IMR-90 (cell line): ENCODE measurements at regions of chr1 and their contacts with region 1.

Region 1: GRCh38 chr1:12549460-12550349 is 68.3 kb downstream of the DHRS3 start:
- DNase-seq: peak; percentile 98
- ATAC-seq: peak; percentile 90
- H3K4me3 ChIP-seq: no peak overlapping the region
- H3K27ac ChIP-seq: peak overlapping the region; percentile 60
- H3K4me1 ChIP-seq: peaks cover 17% of the 10 kb centered on the region
- H3K27me3 ChIP-seq: peaks cover 7% of the 10 kb centered on the region; the same call in 1 of the 2 replicates
- CTCF ChIP-seq: no peak
- POLR2A ChIP-seq: no peak
- RAD21 ChIP-seq: peak; percentile 25

Region 2: DNA sequence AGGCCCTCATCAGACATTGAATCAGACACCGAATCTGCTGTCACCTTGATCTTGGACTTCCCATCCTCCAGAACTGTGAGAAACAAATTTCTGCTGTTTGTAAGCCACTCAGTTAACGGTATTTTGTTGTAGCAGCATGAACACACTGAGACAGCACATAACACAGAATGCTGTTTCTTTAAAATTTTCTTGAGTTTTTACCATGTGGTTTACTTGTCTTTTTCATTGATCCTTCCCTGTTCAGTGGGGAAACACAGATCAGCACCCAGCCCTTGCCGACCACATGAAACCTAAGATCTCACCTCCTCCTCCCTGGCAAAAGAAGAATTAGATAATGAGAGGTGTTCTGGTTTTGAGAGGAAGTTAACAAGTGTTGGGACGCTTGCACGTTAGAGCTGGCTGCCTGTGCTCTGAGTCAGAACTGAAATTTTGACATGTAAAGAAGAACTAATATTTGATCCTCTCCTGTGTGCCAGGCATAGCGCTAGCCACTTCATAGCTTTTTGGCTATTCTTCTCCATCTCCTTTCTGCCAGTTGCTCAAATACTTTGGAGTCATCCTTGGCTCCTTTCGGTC is 111.3 kb before region 1 on chr1:
- CTCF ChIA-PET with region 1: no interaction called
- POLR2A ChIA-PET with region 1: no interaction called
- dilution Hi-C with region 1: no loop called
- in situ Hi-C with region 1: no loop called
- intact Hi-C with region 1: no loop called
- DNase-seq: no peak
- ATAC-seq: no peak
- H3K4me3 ChIP-seq: no peak overlapping the region
- H3K27ac ChIP-seq: no peak overlapping the region
- H3K4me1 ChIP-seq: peaks cover 22% of the 10 kb centered on the region
- H3K27me3 ChIP-seq: no peaks in the 10 kb centered on the region
- CTCF ChIP-seq: no peak
- POLR2A ChIP-seq: no peak
- RAD21 ChIP-seq: no peak

Region 3: DNA sequence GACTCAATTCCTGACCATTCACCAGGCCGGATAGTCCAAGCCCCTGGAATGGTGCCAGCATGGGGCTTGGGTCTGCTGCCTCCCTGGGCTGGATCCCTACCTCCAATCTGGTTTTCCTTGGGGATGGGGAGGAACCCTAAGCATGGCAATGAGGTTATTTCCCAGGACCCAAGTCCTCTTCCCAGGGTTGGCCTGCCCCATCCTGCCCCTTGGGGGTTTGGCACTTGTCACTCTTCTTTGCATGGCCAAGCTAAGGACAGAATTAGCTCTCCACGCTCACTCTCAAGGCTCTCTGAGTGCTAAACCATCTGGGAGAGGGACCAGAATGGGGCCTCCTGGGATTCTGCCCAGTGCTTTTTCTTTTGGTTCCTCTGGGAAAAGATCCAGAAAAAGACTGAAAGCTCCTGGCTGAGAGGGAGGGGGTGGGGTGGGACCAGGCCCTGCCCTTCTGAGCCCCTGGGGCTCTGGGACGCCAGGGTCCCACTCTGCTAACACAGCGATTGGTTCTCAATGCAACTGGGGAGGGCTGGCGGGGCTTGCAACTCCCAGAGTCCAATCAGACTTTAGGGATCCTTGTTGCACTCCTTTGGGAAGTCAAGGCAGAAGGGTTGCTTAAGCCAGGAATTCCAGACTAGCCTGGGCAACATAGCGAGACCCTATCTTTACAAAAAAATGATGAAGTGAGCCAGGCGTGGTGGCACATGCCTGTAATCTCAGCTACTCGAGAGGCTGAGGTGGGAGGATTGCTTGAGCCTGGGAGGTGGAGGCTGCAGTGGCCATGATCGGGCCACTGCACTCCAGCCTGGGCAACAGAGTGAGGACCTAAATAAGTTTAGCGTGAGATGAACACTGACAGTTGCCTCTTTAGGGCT is 15.6 kb after region 1 on chr1:
- CTCF ChIA-PET with region 1: no interaction called
- POLR2A ChIA-PET with region 1: interaction called, 14 read pairs
- dilution Hi-C with region 1: no loop called
- in situ Hi-C with region 1: no loop called
- intact Hi-C with region 1: no loop called
- DNase-seq: no peak
- ATAC-seq: peak; percentile 53
- H3K4me3 ChIP-seq: no peak overlapping the region
- H3K27ac ChIP-seq: no peak overlapping the region
- H3K4me1 ChIP-seq: peaks cover 3% of the 10 kb centered on the region; the same call in 1 of the 2 replicates
- H3K27me3 ChIP-seq: no peaks in the 10 kb centered on the region
- CTCF ChIP-seq: no peak
- POLR2A ChIP-seq: no peak
- RAD21 ChIP-seq: no peak

Region 4: GRCh38 chr1:12596007-12596821 is 46.5 kb after region 1 on chr1:
- CTCF ChIA-PET with region 1: no interaction called
- POLR2A ChIA-PET with region 1: no interaction called
- dilution Hi-C with region 1: no loop called
- in situ Hi-C with region 1: no loop called
- intact Hi-C with region 1: loop called (anchors 2 kb)
- DNase-seq: peak; percentile 98
- ATAC-seq: peak; percentile 86
- H3K4me3 ChIP-seq: no peak overlapping the region; the same call in 1 of the 2 replicates
- H3K27ac ChIP-seq: peak overlapping the region; percentile 83
- H3K4me1 ChIP-seq: peaks cover 27% of the 10 kb centered on the region
- H3K27me3 ChIP-seq: no peaks in the 10 kb centered on the region
- CTCF ChIP-seq: no peak
- POLR2A ChIP-seq: peak; percentile 73
- RAD21 ChIP-seq: peak; percentile 17; the same call in 1 of the 2 replicates

Region 5: DNA sequence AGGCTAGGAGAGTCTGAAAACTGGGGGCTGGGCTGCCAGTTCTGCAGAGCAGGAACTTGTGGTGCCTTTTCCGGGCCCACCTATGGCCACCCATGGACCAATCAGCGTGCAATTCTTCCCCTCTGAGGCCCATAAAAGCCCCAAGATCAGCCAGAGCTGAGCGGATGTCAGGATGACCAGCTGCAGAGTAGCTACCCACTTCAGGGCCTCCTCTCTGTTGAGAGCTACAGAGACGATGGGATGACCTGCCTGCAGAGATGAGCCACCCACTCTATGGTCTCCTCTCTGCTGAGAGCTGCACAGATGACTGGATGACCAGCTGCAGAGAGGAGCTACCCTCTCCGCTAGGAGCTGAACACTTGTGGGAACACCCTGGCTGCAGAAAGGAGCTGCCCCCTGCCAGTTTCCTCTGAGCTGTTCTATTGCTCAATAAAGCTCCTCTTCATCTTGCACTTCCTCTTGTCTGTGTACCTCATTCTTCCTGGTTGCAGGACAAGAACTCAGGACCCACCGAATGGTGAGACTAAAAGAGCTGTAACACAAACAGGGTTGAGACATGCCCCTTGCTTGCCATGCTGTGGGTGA is 81.3 kb after region 1 on chr1:
- CTCF ChIA-PET with region 1: no interaction called
- POLR2A ChIA-PET with region 1: no interaction called
- dilution Hi-C with region 1: no loop called
- in situ Hi-C with region 1: no loop called
- intact Hi-C with region 1: no loop called
- DNase-seq: no peak
- ATAC-seq: no peak
- H3K4me3 ChIP-seq: no peak overlapping the region
- H3K27ac ChIP-seq: no peak overlapping the region
- H3K4me1 ChIP-seq: no peaks in the 10 kb centered on the region
- H3K27me3 ChIP-seq: peaks cover 42% of the 10 kb centered on the region
- CTCF ChIP-seq: no peak
- POLR2A ChIP-seq: no peak
- RAD21 ChIP-seq: no peak